ENCODE measurements at regions of chr6 and their contacts with region 1.

Region 1: GRCh38 chr6:154675602-154676088 is 57.6 kb upstream of the SCAF8 start:
- H3K4me3 ChIP-seq: no peak overlapping the region
- H3K27ac ChIP-seq: no peak overlapping the region
- H3K4me1 ChIP-seq: no peaks in the 10 kb centered on the region
- CTCF ChIP-seq: peak; percentile 95

Region 2: DNA sequence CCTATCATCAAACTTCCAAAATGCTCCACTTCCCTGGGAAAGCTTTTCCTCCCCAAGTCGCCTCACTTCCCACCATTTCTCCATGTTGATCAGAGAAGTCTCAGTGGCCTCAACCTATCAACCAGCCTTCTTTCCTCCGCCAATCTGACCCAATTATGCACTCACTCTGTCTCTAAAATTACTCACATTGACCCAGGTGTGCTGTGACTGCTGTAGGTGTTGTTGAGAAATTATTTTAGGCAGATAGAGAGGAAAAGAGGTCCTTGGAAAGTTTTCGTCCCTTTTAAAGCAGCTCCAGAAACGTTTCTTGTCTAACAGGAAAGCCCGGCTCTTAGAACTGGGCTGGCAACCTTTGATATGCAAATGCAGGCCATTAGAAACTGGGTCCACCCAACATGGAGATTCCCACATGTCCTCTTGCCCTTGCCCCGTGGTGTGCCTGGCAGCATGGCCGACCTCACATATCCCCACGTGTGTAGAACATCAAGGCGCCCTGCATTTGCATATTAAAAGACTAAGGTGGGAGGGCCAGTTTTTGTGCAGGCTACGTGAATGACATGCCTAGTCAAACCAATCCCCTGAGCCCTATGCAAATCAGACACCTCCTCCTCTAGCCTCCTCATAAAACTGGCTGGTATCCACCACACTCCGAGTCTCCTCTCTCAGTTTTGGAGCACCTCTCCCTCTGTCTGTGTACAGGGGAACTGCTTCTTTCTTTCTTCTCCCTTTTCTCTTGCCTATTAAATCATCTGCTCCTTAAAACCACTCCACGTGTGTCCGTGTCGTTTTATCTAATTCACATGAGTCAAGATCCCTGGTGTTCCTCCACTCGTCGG is 332.0 kb before region 1 on chr6:
- CTCF ChIA-PET with region 1: no interaction called
- POLR2A ChIA-PET with region 1: no interaction called
- H3K4me3 ChIP-seq: no peak overlapping the region
- H3K27ac ChIP-seq: no peak overlapping the region
- H3K4me1 ChIP-seq: no peaks in the 10 kb centered on the region
- CTCF ChIP-seq: no peak

Region 3: GRCh38 chr6:154500769-154501577 is 174.7 kb before region 1 on chr6:
- CTCF ChIA-PET with region 1: interaction called, 28 read pairs
- POLR2A ChIA-PET with region 1: no interaction called
- H3K4me3 ChIP-seq: no peak overlapping the region
- H3K27ac ChIP-seq: no peak overlapping the region
- H3K4me1 ChIP-seq: no peaks in the 10 kb centered on the region
- CTCF ChIP-seq: peak; percentile 38; the same call in 1 of the 2 replicates

Region 4: GRCh38 chr6:154689493-154690255 is 14.0 kb after region 1 on chr6:
- CTCF ChIA-PET with region 1: interaction called, 36 read pairs
- POLR2A ChIA-PET with region 1: no interaction called
- H3K4me3 ChIP-seq: no peak overlapping the region
- H3K27ac ChIP-seq: no peak overlapping the region
- H3K4me1 ChIP-seq: no peaks in the 10 kb centered on the region
- CTCF ChIP-seq: no peak

Region 5: GRCh38 chr6:154796484-154796883 is 120.8 kb after region 1 on chr6:
- CTCF ChIA-PET with region 1: interaction called, 125 read pairs
- POLR2A ChIA-PET with region 1: no interaction called
- H3K4me3 ChIP-seq: no peak overlapping the region
- H3K27ac ChIP-seq: no peak overlapping the region
- H3K4me1 ChIP-seq: no peaks in the 10 kb centered on the region
- CTCF ChIP-seq: no peak

Region 6: DNA sequence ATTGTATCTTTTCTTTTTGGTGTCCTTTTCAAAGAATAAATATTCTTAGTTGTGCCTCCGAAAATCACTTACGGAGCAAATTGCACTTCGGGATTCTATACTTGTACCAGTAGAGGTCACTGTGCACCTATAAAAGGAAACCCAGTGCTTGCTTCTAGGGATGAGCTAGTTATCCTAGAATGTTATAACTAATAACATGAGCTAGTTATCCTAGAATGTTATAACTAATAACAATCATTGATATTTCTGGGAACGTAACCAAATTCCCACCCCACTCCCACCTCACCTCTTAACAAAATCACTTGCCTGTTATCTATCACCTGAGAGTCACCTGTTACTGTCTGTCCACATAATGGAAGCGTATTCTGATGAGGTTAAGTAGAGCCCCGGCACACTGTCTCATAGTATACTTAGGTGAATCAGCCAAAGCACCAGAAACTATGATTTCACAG is 192.5 kb after region 1 on chr6:
- CTCF ChIA-PET with region 1: interaction called, 11 read pairs
- POLR2A ChIA-PET with region 1: no interaction called
- H3K4me3 ChIP-seq: no peak overlapping the region
- H3K27ac ChIP-seq: no peak overlapping the region
- H3K4me1 ChIP-seq: no peaks in the 10 kb centered on the region
- CTCF ChIP-seq: no peak

Region 7: DNA sequence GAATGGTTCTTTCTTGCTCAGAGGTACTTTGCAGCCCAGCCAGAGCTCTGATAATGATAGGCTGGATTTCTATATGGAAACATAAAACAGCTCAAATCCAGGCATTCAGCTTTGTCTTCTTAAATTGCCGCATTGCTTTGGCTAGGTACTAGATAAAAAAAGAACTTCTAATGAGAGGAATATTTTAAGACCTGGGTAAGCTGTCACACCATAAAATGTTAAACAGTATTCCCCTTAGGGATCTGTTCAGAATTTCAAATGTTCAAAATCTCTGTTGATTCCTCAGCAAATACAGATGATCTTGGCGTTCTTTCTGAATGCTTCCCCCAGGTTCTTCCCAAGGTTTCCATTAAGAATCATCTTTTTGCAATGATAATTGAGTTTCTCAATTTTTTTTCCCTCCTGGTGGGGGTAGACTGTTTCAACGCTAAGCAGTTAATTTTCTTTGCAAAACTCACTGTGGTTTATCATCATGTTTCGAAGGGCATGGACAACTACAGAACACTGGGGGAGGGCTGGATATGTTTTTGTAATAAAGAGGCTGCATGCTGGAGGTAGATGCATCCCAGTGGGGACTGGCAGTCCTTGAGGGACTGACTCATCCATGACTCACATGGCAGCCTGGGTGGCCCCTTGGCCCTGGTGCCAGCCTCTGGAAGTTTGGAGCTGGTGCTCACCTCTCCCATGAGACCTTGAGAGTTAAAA is 350.5 kb after region 1 on chr6:
- CTCF ChIA-PET with region 1: no interaction called
- POLR2A ChIA-PET with region 1: no interaction called
- H3K4me3 ChIP-seq: no peak overlapping the region
- H3K27ac ChIP-seq: peak overlapping the region; percentile 32
- H3K4me1 ChIP-seq: peaks cover 11% of the 10 kb centered on the region
- CTCF ChIP-seq: no peak

Region 8: GRCh38 chr6:155174576-155175211 is 499.0 kb after region 1 on chr6:
- CTCF ChIA-PET with region 1: interaction called, 13 read pairs
- POLR2A ChIA-PET with region 1: no interaction called
- H3K4me3 ChIP-seq: no peak overlapping the region
- H3K27ac ChIP-seq: no peak overlapping the region
- H3K4me1 ChIP-seq: peaks cover 13% of the 10 kb centered on the region
- CTCF ChIP-seq: peak; percentile 62; the same call in 1 of the 2 replicates